IMR-90 (cell line): ENCODE measurements at regions of chr12 and their contacts with region 1.

Region 1: DNA sequence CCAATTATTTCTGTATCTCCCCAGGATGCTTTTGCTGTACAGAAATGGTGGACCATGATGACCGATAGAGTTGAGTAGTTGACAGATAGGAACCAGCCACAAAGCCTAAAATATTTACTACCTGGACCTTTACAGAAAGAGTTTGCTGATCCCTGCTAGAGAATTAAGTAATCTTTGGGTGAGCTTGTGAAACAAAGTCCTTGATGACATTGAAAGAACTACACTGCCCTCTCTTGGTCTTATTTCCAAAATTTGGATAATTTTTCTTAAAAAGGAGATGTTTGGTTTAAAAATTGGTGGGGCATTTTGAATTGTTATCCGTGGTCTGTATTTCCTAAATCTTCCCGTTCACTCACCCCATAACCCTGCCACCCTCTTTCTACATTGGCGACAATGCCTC is 13.7 kb upstream of the TCTN1 start:
- DNase-seq: peak; percentile 72
- ATAC-seq: peak; percentile 56; the same call in 1 of the 2 replicates
- H3K4me3 ChIP-seq: no peak overlapping the region
- H3K27ac ChIP-seq: no peak overlapping the region
- H3K4me1 ChIP-seq: no peaks in the 10 kb centered on the region
- H3K27me3 ChIP-seq: no peaks in the 10 kb centered on the region
- CTCF ChIP-seq: peak; percentile 78
- POLR2A ChIP-seq: no peak
- RAD21 ChIP-seq: peak; percentile 80

Region 2: GRCh38 chr12:110304061-110304551 is 296.1 kb before region 1 on chr12:
- CTCF ChIA-PET with region 1: no interaction called
- POLR2A ChIA-PET with region 1: no interaction called
- dilution Hi-C with region 1: no loop called
- in situ Hi-C with region 1: no loop called
- intact Hi-C with region 1: no loop called
- DNase-seq: peak; percentile 68
- ATAC-seq: peak; percentile 49
- H3K4me3 ChIP-seq: no peak overlapping the region
- H3K27ac ChIP-seq: peak overlapping the region; percentile 61
- H3K4me1 ChIP-seq: peaks cover 18% of the 10 kb centered on the region
- H3K27me3 ChIP-seq: no peaks in the 10 kb centered on the region
- CTCF ChIP-seq: no peak
- POLR2A ChIP-seq: no peak
- RAD21 ChIP-seq: no peak

Region 3: GRCh38 chr12:110449799-110450497 is 150.3 kb before region 1 on chr12 and contains the start of gene ARPC3:
- CTCF ChIA-PET with region 1: interaction called, 13 read pairs
- POLR2A ChIA-PET with region 1: no interaction called
- dilution Hi-C with region 1: no loop called
- in situ Hi-C with region 1: loop called (anchors 5 kb)
- intact Hi-C with region 1: loop called (anchors 1 kb)
- DNase-seq: peak; percentile 92
- ATAC-seq: peak; percentile 98
- H3K4me3 ChIP-seq: peak within 1 kb of the TSS; percentile 74
- H3K27ac ChIP-seq: peak within 1 kb of the TSS; percentile 97
- H3K4me1 ChIP-seq: 0 out of 2 replicates have a peak, but pooled peaks cover 5% of the 10 kb centered on the region
- H3K27me3 ChIP-seq: no peaks in the 10 kb centered on the region
- CTCF ChIP-seq: peak; percentile 97
- POLR2A ChIP-seq: peak; percentile 82
- RAD21 ChIP-seq: peak; percentile 97
- total RNA-seq, gene ARPC3: 204 and 234 TPM in 2 replicates

Region 4: GRCh38 chr12:110468212-110469048 is 131.8 kb before region 1 on chr12 and contains the starts of genes FAM216A and GPN3:
- CTCF ChIA-PET with region 1: interaction called, 7 read pairs
- POLR2A ChIA-PET with region 1: no interaction called
- dilution Hi-C with region 1: no loop called
- in situ Hi-C with region 1: no loop called
- intact Hi-C with region 1: loop called (anchors 1 kb)
- DNase-seq: peak; percentile 98
- ATAC-seq: peak; percentile 90
- H3K4me3 ChIP-seq: peak within 1 kb of the TSS; percentile 53
- H3K27ac ChIP-seq: peak within 1 kb of the TSS; percentile 86
- H3K4me1 ChIP-seq: peaks cover 3% of the 10 kb centered on the region; the same call in 1 of the 2 replicates
- H3K27me3 ChIP-seq: no peaks in the 10 kb centered on the region
- CTCF ChIP-seq: no peak
- POLR2A ChIP-seq: peak; percentile 83
- RAD21 ChIP-seq: no peak
- total RNA-seq, gene FAM216A: 14.0 and 18.9 TPM in 2 replicates
- total RNA-seq, gene GPN3: 7.7 and 24.7 TPM in 2 replicates

Region 5: GRCh38 chr12:110513842-110514241 is 86.4 kb before region 1 on chr12:
- CTCF ChIA-PET with region 1: interaction called, 13 read pairs
- POLR2A ChIA-PET with region 1: no interaction called
- dilution Hi-C with region 1: no loop called
- in situ Hi-C with region 1: loop called (anchors 5 kb)
- intact Hi-C with region 1: loop called (anchors 1 kb)
- DNase-seq: no peak
- ATAC-seq: no peak
- H3K4me3 ChIP-seq: no peak overlapping the region
- H3K27ac ChIP-seq: no peak overlapping the region
- H3K4me1 ChIP-seq: no peaks in the 10 kb centered on the region
- H3K27me3 ChIP-seq: no peaks in the 10 kb centered on the region
- CTCF ChIP-seq: no peak
- POLR2A ChIP-seq: no peak
- RAD21 ChIP-seq: no peak

Region 6: DNA sequence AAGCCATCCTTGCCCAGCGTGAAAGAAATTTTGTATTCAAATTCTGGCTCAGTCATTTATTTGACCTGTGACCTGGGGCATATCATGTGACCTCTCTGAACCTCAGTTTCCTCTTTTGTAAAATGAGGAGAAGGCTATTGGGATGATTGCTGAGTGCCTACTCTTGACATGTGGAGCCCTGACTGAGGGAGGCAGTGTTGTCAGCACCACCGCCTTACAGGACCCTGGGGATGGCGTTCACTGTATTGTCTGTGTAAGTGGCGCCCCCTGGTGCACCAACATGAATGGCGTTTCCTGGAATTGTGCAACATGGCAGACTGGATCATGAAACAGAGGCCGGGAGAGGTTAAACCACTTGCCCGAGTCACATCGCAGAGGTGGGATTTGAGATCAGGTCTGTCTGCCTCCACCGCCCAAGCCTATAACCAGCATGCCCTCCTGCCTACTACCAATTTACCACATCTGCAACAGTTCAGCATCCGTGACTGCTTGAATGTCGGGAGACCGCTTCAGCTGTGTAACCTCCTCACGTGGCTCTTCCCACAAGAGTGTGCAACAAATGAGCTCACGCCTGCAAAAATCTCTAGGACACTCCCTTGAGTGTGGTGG is 226.4 kb after region 1 on chr12:
- CTCF ChIA-PET with region 1: no interaction called
- POLR2A ChIA-PET with region 1: no interaction called
- dilution Hi-C with region 1: no loop called
- in situ Hi-C with region 1: no loop called
- intact Hi-C with region 1: loop called (anchors 1 kb)
- DNase-seq: peak; percentile 72
- ATAC-seq: peak; percentile 93
- H3K4me3 ChIP-seq: no peak overlapping the region
- H3K27ac ChIP-seq: no peak overlapping the region
- H3K4me1 ChIP-seq: no peaks in the 10 kb centered on the region
- H3K27me3 ChIP-seq: peaks cover 9% of the 10 kb centered on the region
- CTCF ChIP-seq: peak; percentile 75
- POLR2A ChIP-seq: no peak
- RAD21 ChIP-seq: peak; percentile 71

Region 7: DNA sequence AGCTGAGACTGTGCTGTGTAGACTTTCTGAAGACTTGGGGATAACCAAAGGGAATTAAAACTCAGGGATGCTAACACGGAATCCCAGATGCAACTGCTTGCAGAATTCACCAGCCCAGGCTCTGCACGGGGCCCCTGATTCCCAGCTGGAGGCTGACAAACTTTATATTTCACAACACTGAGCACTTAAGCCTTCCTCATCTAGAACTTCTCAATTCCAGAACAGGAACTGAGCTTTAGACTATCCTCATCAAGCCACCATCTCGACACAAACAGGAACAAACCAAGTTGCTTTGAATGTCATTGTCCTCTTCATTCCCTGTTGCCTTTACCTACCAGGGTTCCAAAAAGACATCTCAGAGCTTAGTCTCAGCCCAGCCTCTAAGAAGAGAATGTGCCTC is 268.8 kb after region 1 on chr12:
- CTCF ChIA-PET with region 1: no interaction called
- POLR2A ChIA-PET with region 1: no interaction called
- dilution Hi-C with region 1: no loop called
- in situ Hi-C with region 1: no loop called
- intact Hi-C with region 1: no loop called
- DNase-seq: no peak
- ATAC-seq: no peak
- H3K4me3 ChIP-seq: no peak overlapping the region
- H3K27ac ChIP-seq: no peak overlapping the region
- H3K4me1 ChIP-seq: no peaks in the 10 kb centered on the region
- H3K27me3 ChIP-seq: no peaks in the 10 kb centered on the region
- CTCF ChIP-seq: no peak
- POLR2A ChIP-seq: no peak
- RAD21 ChIP-seq: no peak